H1 (cell line): ENCODE measurements at regions of chr9 and their contacts with region 1.

Region 1: GRCh38 chr9:126490871-126491567 is 122.7 kb upstream of the LMX1B start:
- DNase-seq: no peak
- H3K4me3 ChIP-seq: no peak overlapping the region
- H3K27ac ChIP-seq: no peak overlapping the region
- H3K4me1 ChIP-seq: no peaks in the 10 kb centered on the region; a peak in 1 of 7 replicates
- H3K27me3 ChIP-seq: no peaks in the 10 kb centered on the region
- CTCF ChIP-seq: peak; percentile 46 to 80 (median 77)
- EP300 ChIP-seq: no peak
- POLR2A ChIP-seq: no peak
- RAD21 ChIP-seq: peak; percentile 94 to 95

Region 2: GRCh38 chr9:126301985-126302603 is 188.9 kb before region 1 on chr9:
- CTCF ChIA-PET with region 1: interaction called, 12 read pairs
- POLR2A ChIA-PET with region 1: no interaction called
- DNase-seq: peak; percentile 31 to 57
- H3K4me3 ChIP-seq: no peak overlapping the region
- H3K27ac ChIP-seq: no peak overlapping the region
- H3K4me1 ChIP-seq: no peaks in the 10 kb centered on the region; a peak in 1 of 7 replicates
- H3K27me3 ChIP-seq: no peaks in the 10 kb centered on the region
- CTCF ChIP-seq: peak; percentile 62 to 88 (median 84)
- EP300 ChIP-seq: no peak
- POLR2A ChIP-seq: no peak
- RAD21 ChIP-seq: peak; percentile 74 to 83

Region 3: DNA sequence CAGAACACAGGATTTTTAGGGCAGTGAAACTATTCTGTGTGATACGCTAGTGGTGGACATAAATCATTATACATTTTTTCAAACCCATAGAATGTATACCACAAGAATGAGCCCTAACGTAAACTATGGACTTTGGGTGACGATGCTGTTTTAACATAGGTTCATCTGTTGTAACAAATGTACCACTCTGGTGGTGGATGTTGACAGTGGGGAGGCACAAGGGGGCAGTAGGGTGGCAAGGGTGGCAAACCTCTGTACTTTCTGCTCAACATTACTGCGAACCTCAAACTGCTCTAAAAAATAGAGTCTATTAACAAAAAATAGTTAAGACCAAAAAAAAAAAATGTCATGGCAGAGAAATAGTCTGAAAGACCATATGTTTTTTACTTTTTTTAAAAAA is 173.5 kb before region 1 on chr9:
- CTCF ChIA-PET with region 1: interaction called, 14 read pairs
- POLR2A ChIA-PET with region 1: no interaction called
- DNase-seq: no peak
- H3K4me3 ChIP-seq: no peak overlapping the region
- H3K27ac ChIP-seq: no peak overlapping the region
- H3K4me1 ChIP-seq: peaks cover 0 to 4% (median 2%) of the 10 kb centered on the region in 4 experiments; a peak in 2 of 7 replicates
- H3K27me3 ChIP-seq: no peaks in the 10 kb centered on the region
- CTCF ChIP-seq: peak; percentile 46 to 56 (median 47)
- EP300 ChIP-seq: no peak
- POLR2A ChIP-seq: no peak
- RAD21 ChIP-seq: peak; percentile 48 to 57; a peak in 3 of 4 replicates

Region 4: DNA sequence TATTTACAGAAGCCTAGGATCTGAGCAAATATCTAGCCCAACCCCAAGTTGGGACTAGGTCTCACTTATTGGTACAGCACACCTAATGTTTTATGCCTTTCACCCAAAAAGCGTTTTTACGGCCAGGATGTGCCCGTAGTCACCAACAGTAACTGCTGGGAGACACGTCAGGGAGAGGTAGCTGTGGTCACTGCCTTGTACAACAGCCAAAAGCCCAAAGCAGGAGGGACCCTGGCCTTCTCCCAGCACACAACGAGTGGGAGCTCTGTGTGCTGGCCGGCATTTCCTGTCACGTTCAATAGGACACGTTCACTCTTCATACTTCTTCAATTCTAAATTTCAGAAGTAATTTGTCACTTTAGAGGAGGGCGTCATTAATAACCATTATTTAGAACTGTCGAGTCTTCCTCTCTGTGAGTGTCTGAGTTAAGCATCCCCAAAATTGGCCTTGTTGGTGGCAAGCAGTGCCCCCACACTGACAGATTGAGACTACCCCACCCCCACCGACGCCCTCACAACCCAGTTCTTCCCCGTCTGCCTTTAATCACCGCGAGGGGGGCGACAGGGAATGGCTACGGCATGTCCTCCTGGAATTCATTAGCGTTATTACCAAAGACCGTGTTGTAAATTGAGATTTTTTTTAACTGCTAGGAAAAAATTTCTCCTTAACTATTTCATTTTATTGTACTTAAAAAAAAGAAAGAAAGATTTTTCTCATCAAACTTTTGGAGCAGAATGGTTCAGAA is 83.7 kb before region 1 on chr9:
- CTCF ChIA-PET with region 1: interaction called, 11 read pairs
- POLR2A ChIA-PET with region 1: no interaction called
- DNase-seq: no peak
- H3K4me3 ChIP-seq: no peak overlapping the region
- H3K27ac ChIP-seq: no peak overlapping the region
- H3K4me1 ChIP-seq: peaks cover 3 to 18% (median 10%) of the 10 kb centered on the region in 4 experiments; a peak in 5 of 7 replicates
- H3K27me3 ChIP-seq: no peaks in the 10 kb centered on the region
- CTCF ChIP-seq: no peak
- EP300 ChIP-seq: no peak
- POLR2A ChIP-seq: no peak
- RAD21 ChIP-seq: no peak

Region 5: GRCh38 chr9:126431077-126431742 is 59.8 kb before region 1 on chr9:
- CTCF ChIA-PET with region 1: interaction called, 10 read pairs
- POLR2A ChIA-PET with region 1: no interaction called
- DNase-seq: no peak
- H3K4me3 ChIP-seq: no peak overlapping the region
- H3K27ac ChIP-seq: no peak overlapping the region
- H3K4me1 ChIP-seq: peaks cover 0 to 11% (median 5%) of the 10 kb centered on the region in 4 experiments; a peak in 4 of 7 replicates
- H3K27me3 ChIP-seq: no peaks in the 10 kb centered on the region
- CTCF ChIP-seq: no peak
- EP300 ChIP-seq: no peak
- POLR2A ChIP-seq: no peak
- RAD21 ChIP-seq: no peak

Region 6: DNA sequence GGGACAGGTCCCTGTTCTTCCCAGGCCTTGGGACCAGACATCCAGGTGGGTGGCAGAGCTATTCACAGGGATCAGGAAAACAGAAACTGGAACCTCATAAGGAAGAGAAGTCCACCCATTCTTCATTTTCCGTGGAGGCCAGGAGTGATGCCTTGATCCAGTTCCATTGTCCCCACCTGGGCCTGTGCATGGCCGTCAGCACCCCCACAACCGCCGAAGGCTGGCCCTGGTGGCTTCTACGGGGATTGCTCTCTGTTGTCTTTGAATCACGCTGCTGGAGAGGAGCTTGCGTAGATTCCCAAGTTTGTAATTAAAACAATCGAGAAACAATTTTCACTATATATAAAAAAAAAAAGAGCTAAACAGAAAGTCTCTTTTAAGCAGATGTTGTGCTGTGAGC is 30.0 kb before region 1 on chr9:
- CTCF ChIA-PET with region 1: interaction called, 22 read pairs
- POLR2A ChIA-PET with region 1: no interaction called
- DNase-seq: no peak
- H3K4me3 ChIP-seq: no peak overlapping the region
- H3K27ac ChIP-seq: no peak overlapping the region
- H3K4me1 ChIP-seq: no peaks in the 10 kb centered on the region
- H3K27me3 ChIP-seq: no peaks in the 10 kb centered on the region
- CTCF ChIP-seq: peak in 2 of 3 experiments; percentile 22 to 36; a peak in 2 of 4 replicates
- EP300 ChIP-seq: no peak
- POLR2A ChIP-seq: no peak
- RAD21 ChIP-seq: no peak

Region 7: GRCh38 chr9:126506361-126506941 is 15.4 kb after region 1 on chr9:
- CTCF ChIA-PET with region 1: interaction called, 30 read pairs
- POLR2A ChIA-PET with region 1: no interaction called
- DNase-seq: no peak
- H3K4me3 ChIP-seq: no peak overlapping the region
- H3K27ac ChIP-seq: no peak overlapping the region
- H3K4me1 ChIP-seq: peaks cover 0 to 4% (median 1%) of the 10 kb centered on the region in 4 experiments; a peak in 2 of 7 replicates
- H3K27me3 ChIP-seq: no peaks in the 10 kb centered on the region; a peak in 3 of 7 replicates
- CTCF ChIP-seq: no peak
- EP300 ChIP-seq: no peak
- POLR2A ChIP-seq: no peak
- RAD21 ChIP-seq: no peak

Region 8: DNA sequence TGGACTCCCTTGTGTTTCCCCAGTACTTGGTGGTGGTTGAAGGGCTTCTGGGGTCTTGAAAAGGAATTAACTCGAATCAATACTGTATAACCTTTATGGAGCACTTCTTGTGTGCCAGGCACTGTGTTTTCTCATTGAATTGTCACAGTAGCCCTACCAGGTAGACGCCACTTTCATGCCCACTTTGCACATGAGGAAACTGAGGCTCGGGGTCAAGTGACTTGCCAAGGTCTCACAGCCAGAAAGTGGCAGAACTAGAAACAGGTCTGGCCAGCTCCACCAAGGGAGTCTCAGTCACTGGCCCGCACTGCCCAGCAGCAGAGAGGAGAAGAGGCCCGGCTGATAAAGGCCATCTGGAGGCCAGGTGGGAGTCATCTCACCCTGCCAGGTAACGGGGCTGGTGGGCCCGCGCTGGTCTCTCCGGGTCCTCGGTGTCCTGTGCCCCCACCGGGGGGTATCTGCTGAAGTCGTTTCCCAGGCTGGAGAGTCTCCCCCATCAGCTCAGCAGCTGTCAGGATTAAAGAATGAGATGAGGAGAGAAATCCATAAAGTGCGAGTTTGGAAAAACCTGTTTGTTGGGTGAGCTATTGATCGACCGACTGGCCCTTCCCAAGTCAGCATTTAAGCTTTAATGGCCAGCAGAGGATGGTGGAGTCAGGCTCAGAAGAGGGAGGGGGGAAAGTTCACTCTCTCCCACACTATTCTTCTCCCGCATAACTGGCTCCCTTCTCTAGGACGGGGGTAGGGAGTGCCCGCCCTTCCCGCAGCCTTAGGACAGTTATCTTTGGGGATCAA is 152.9 kb after region 1 on chr9:
- CTCF ChIA-PET with region 1: no interaction called
- POLR2A ChIA-PET with region 1: no interaction called
- DNase-seq: no peak
- H3K4me3 ChIP-seq: no peak overlapping the region
- H3K27ac ChIP-seq: no peak overlapping the region
- H3K4me1 ChIP-seq: peaks cover 0 to 19% (median 7%) of the 10 kb centered on the region in 4 experiments; a peak in 5 of 7 replicates
- H3K27me3 ChIP-seq: peaks cover 2 to 33% (median 24%) of the 10 kb centered on the region in 4 experiments
- CTCF ChIP-seq: no peak
- EP300 ChIP-seq: no peak
- POLR2A ChIP-seq: no peak
- RAD21 ChIP-seq: no peak